Common myeloid progenitor, CD34-positive (primary cell): ENCODE measurements at regions of chr10 and their contacts with region 1.

Region 1: DNA sequence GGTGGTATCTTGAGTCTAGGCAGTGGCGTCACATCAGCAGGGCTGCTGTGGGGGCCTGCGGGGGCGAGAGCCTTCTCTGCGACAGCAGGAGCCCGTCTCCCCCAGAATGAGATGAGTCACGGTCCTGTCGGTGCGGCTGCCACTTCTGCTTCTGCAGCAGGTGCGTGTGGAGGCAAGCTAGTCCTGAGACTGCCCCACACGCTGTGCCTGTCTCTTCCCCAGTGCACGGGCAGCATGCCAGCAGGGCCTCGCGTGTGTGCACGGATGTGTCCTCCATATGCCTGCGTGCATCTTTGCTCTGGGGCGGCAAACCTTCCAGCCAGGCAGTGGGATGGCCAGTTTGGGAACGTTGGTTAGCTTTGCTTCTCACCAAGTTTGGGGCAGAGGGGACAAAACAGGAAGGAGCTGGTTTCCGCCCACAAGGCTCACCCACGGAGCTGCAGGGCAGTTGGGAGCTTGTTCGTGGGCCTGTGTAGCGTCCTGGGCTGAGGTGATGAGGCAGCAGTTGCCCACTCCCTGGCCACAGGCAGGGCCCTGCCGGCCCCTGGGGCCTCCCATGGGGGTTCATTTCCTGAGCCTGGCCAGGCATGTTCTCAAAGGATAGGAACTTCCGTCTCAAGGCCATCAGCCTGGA is 60.8 kb upstream of the PPIF start:
- DNase-seq: peak; percentile 97 to 100 (median 99)
- H3K4me3 ChIP-seq: peak overlapping the region in 4 of 7 experiments; percentile 8 to 43 (median 16)
- H3K27ac ChIP-seq: peak overlapping the region; percentile 91 to 96
- H3K4me1 ChIP-seq: peaks cover 24 to 99% (median 71%) of the 10 kb centered on the region in 4 experiments
- H3K27me3 ChIP-seq: no peaks in the 10 kb centered on the region

Region 2: GRCh38 chr10:79149662-79150443 is 136.6 kb before region 1 on chr10:
- CTCF ChIA-PET with region 1: no interaction called
- POLR2A ChIA-PET with region 1: no interaction called
- DNase-seq: peak in 1 of 3 donors; percentile 42
- H3K4me3 ChIP-seq: peak overlapping the region in 1 of 7 experiments; percentile 6
- H3K27ac ChIP-seq: peak overlapping the region; percentile 64 to 80
- H3K4me1 ChIP-seq: peaks cover 10 to 91% (median 78%) of the 10 kb centered on the region in 4 experiments
- H3K27me3 ChIP-seq: no peaks in the 10 kb centered on the region

Region 3: GRCh38 chr10:79176949-79177602 is 109.4 kb before region 1 on chr10:
- CTCF ChIA-PET with region 1: no interaction called
- POLR2A ChIA-PET with region 1: no interaction called
- DNase-seq: no peak
- H3K4me3 ChIP-seq: peak overlapping the region in 2 of 7 experiments; percentile 12 to 47
- H3K27ac ChIP-seq: peak overlapping the region; percentile 73 to 91
- H3K4me1 ChIP-seq: peaks cover 4 to 84% (median 82%) of the 10 kb centered on the region in 4 experiments
- H3K27me3 ChIP-seq: no peaks in the 10 kb centered on the region

Region 4: GRCh38 chr10:79242620-79243152 is 43.7 kb before region 1 on chr10:
- CTCF ChIA-PET with region 1: interaction called, 18 read pairs
- POLR2A ChIA-PET with region 1: interaction called, 29 read pairs
- DNase-seq: peak; percentile 44 to 79 (median 73)
- H3K4me3 ChIP-seq: peak overlapping the region in 6 of 7 experiments; percentile 39 to 79 (median 59)
- H3K27ac ChIP-seq: no peak overlapping the region
- H3K4me1 ChIP-seq: peaks cover 18 to 92% (median 91%) of the 10 kb centered on the region in 4 experiments
- H3K27me3 ChIP-seq: no peaks in the 10 kb centered on the region

Region 5: DNA sequence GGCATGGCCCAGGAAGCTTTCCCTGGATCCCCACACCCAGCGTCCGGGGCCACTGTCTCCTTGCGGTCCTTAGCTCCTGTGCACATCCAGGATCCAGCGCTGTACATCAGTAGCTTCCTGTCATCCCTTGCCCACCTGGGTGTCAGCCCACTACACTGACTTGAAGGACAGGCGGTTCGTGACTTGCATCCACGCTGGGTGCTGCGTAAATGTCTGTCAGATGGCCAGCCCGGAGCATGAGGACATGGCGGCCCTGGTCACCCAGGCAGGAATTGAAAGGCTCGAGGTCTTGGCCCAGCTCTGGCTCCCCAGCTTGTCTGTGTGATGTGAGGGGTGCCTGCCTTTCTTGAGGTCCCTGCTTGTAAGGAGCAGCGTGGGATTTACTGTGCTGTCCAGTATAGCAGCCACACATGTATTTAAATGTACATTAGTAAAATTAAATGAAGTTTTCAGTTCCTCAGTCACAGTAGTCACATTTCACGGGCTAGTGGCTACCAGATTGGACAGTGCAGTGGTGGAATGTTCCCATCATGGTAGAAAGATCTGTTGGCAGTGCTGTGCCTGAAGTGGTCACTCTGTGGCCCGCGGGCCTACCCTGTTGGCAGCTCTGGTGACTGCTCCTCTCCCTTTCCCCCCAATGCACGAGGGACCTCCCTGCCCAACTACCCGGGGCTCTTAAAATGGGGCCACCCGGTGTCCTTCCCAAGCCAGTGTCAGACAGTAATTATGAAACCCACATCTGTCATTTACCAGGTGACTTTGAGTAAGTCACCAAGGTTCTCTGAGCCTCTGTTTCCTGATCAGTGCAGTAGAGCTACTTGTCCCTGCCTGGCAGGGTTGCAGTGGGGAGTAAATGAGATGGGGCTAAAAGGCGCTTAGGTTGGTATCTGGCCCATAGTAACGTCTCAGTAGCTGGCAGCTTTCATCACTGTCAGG is 37.0 kb before region 1 on chr10:
- CTCF ChIA-PET with region 1: interaction called, 18 read pairs
- POLR2A ChIA-PET with region 1: interaction called, 29 read pairs
- DNase-seq: no peak
- H3K4me3 ChIP-seq: peak overlapping the region in 2 of 7 experiments; percentile 35 to 48
- H3K27ac ChIP-seq: peak overlapping the region; percentile 51 to 59
- H3K4me1 ChIP-seq: peaks cover 15 to 95% (median 62%) of the 10 kb centered on the region in 4 experiments
- H3K27me3 ChIP-seq: no peaks in the 10 kb centered on the region

Region 6: GRCh38 chr10:79316671-79317431 is 30.4 kb after region 1 on chr10:
- CTCF ChIA-PET with region 1: interaction called, 4 read pairs
- POLR2A ChIA-PET with region 1: interaction called, 10 read pairs
- DNase-seq: peak; percentile 27 to 72 (median 62)
- H3K4me3 ChIP-seq: peak overlapping the region in 4 of 7 experiments; percentile 8 to 46 (median 12)
- H3K27ac ChIP-seq: no peak overlapping the region
- H3K4me1 ChIP-seq: peaks cover 21 to 72% (median 55%) of the 10 kb centered on the region in 4 experiments
- H3K27me3 ChIP-seq: no peaks in the 10 kb centered on the region

Region 7: DNA sequence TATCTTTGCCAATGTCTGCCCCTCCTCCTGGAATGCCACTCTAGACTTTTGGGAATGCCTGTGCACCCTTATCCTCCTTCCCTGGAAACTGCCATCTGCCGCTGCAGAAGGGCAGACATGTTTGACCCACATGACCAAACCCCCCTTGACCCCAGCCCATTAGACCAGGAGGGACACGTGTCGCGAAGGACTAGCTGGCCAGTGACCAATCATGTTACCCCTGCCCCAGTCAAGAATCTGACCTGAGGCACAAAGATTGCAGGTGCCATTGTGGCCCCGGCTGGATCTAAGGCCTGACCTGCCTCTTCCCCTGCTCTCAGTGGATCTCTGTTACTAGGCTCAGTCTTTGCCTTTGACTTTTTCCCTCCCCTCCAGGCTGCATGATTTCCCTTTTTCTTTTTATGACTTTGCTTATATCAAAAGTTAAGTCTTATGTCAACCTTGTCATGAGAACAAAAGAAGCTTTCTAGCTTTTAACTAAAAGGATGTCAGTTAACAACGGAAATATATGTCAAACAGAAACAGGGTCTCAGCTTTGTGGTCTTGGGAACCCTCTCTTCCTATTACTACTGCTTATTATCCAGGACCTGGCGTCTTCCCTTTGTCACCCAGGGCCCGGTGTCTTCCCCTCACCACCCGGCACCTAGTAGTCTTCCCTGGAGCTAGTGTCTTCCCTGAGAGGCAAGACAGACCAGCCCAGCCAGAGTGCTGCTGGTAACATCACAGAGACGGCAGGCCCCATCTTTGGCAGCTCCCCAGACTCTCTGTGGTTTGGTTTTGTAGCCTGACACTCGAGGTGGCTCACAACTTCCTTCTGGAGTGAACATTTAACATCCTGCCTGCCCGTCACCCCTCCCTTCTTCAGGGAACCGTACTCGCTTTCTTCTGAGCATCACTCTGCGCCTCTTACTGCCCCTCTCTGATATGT is 36.4 kb after region 1 on chr10:
- CTCF ChIA-PET with region 1: interaction called, 3 read pairs
- POLR2A ChIA-PET with region 1: interaction called, 12 read pairs
- DNase-seq: peak; percentile 88 to 95 (median 95)
- H3K4me3 ChIP-seq: peak overlapping the region in 4 of 7 experiments; percentile 20 to 39 (median 28)
- H3K27ac ChIP-seq: peak overlapping the region; percentile 36 to 55
- H3K4me1 ChIP-seq: peaks cover 38 to 73% (median 66%) of the 10 kb centered on the region in 4 experiments
- H3K27me3 ChIP-seq: no peaks in the 10 kb centered on the region